HEK293 (cell line): ENCODE measurements at regions of chr6 and their contacts with region 1.

Region 1: DNA sequence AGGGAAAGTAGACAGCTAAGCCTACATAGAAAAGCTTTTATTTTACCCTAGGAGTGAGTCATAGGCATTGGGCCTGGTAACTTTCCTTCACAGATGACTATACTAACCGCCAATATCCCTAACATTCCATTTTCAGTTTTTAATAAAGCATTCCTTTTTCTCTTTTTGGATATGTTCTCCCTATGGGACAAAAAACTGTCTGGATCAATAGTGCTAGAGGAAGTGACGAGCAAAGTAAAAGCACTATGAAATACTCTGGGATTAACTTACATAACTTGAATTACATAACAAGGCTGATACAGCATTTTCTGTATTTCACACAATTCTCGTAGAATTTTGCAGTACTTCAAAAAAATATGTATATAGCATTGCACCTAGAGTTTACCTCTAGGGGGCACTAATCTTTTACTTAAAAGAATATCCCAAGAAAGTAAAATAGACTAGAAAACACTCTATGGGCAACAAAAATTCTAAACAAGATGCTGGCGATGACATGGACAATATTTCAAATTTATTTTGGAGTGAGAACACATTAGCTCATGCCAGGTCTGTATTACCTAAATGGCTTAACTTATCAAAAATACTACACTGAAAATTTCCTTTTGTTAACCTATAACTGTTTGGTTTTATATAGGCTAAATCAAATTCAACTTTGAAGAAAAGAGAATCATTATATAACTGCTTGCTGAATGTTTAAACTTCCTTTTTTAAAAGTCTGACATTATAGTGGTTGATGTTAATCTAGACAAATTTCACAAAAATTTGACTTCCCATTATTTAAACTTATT is 66.3 kb upstream of the DST start:
- H3K4me3 ChIP-seq: no peak overlapping the region
- H3K27ac ChIP-seq: no peak overlapping the region
- H3K4me1 ChIP-seq: peaks cover 9% of the 10 kb centered on the region; the same call in 1 of the 2 replicates
- CTCF ChIP-seq: no peak

Region 2: DNA sequence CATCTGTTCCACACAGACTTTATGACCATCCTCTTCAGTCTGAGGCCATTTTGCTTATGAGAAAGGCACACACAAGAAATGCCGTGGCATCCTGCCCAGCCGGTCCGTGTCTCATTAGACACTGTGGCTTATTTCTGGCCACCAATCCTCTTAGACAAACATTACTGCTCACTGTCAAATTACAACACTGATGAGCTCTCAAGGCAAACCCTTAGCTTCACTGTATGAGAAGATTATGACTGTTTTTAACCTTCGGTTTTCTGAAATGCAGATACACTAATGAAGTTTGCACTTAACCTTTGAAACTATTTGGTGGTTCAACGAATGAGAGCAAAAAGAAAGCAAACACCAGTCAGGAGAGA is 15.8 kb before region 1 on chr6:
- CTCF ChIA-PET with region 1: interaction called, 49 read pairs
- POLR2A ChIA-PET with region 1: no interaction called
- H3K4me3 ChIP-seq: no peak overlapping the region
- H3K27ac ChIP-seq: 0 out of 2 replicates have a peak overlapping the region, but pooled peaks have one; percentile 8
- H3K4me1 ChIP-seq: peaks cover 29% of the 10 kb centered on the region
- CTCF ChIP-seq: no peak

Region 3: GRCh38 chr6:56746767-56747504 is 37.9 kb after region 1 on chr6:
- CTCF ChIA-PET with region 1: interaction called, 21 read pairs
- POLR2A ChIA-PET with region 1: no interaction called
- H3K4me3 ChIP-seq: no peak overlapping the region
- H3K27ac ChIP-seq: no peak overlapping the region
- H3K4me1 ChIP-seq: peaks cover 38% of the 10 kb centered on the region
- CTCF ChIP-seq: no peak

Region 4: DNA sequence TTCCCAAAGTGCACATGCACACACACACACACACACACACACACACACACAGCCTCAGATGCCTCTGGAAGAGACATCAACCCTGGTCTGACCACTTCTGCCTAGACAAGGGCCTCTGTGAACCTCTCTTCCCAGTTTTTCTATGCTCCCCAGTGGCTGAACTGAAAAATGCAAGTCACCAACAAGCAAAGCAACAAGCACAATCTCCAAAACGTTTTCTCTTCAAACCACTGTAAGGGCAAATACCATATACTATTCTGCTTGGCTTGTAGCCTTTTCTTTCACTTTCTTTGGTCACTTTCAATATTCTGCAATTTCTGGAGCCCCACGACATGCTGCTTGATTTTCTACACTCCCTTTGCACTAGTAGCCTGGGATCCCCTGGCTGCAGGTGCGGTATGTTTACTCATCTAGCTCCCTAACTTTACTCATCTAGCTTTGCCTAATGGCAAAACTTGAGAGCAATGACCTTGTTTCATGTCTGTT is 55.1 kb after region 1 on chr6:
- CTCF ChIA-PET with region 1: interaction called, 120 read pairs
- POLR2A ChIA-PET with region 1: interaction called, 3 read pairs
- H3K4me3 ChIP-seq: no peak overlapping the region
- H3K27ac ChIP-seq: no peak overlapping the region
- H3K4me1 ChIP-seq: 0 out of 2 replicates have a peak, but pooled peaks cover 6% of the 10 kb centered on the region
- CTCF ChIP-seq: peak; percentile 52

Region 5: GRCh38 chr6:56851541-56852259 is 142.7 kb after region 1 on chr6:
- CTCF ChIA-PET with region 1: interaction called, 111 read pairs
- POLR2A ChIA-PET with region 1: no interaction called
- H3K4me3 ChIP-seq: peak overlapping the region; percentile 43
- H3K27ac ChIP-seq: no peak overlapping the region
- H3K4me1 ChIP-seq: peaks cover 18% of the 10 kb centered on the region
- CTCF ChIP-seq: peak; percentile 57; the same call in 1 of the 2 replicates